ENCODE measurements at regions of chr9 and their contacts with region 1.

Region 1: GRCh38 chr9:129487642-129488409 is 133.1 kb downstream of the C9orf50 start:
- DNase-seq: peak; percentile 17
- H3K4me3 Mint-ChIP-seq: peak overlapping the region; percentile 92
- H3K27ac Mint-ChIP-seq: peak overlapping the region; percentile 98
- H3K4me1 Mint-ChIP-seq: peaks cover 60% of the 10 kb centered on the region
- H3K27me3 Mint-ChIP-seq: peaks cover 5% of the 10 kb centered on the region

Region 2: GRCh38 chr9:129258124-129258822 is 229.6 kb before region 1 on chr9:
- intact Hi-C with region 1: loop called (anchors 2 kb)
- DNase-seq: peak; percentile 85
- H3K4me3 Mint-ChIP-seq: peak overlapping the region; percentile 60
- H3K27ac Mint-ChIP-seq: no peak overlapping the region
- H3K4me1 Mint-ChIP-seq: peaks cover 33% of the 10 kb centered on the region
- H3K27me3 Mint-ChIP-seq: peaks cover 23% of the 10 kb centered on the region

Region 3: DNA sequence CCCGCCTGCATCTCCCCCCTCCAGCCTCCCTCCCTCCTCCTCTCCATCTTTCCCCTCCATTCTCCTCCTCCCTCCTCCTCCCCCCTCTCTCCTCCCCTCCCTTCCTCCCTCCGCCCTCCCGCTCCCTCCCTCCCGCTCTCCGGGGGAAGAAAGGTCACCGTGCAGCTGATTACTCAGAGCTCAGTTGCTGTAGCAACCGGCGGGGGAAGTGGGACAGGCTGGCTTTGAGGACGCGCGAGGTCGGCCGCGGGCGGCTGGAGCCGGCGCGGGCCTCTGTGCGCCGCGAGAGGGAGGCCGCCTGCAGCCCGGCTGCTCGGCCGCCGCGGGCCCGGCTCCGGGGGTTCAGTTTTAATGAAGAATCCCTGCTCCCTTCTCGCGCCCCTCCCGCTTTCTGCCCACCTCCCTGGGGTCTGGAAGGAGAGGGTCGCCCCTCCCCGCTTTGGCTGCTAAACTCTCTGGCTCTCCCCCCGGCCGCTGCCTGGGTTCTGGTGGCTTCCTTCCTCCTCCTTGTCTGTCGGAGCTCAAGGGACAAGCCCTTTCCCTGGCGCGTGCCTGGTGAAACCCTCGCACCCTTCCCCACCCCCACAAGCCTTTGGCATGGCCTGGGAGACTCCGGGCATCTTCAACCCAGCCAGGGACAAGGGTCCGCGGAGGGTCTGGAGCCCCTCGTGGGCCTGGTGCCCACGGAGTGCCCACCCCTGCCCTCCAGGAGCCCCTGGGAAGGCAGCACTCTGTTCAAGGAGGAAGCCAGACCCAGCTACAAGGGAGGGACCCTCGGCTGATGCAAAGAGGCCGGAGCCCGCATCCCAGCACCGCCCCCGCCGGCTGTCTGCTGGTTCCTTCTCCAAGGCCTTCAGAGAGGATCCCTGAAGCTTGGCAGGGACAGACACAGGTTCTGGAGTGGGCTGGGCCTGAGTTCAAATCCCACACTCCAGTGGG is 27.2 kb before region 1 on chr9:
- intact Hi-C with region 1: loop called (anchors 1 kb)
- DNase-seq: peak; percentile 83
- H3K4me3 Mint-ChIP-seq: peak overlapping the region; percentile 74
- H3K27ac Mint-ChIP-seq: peak overlapping the region; percentile 91
- H3K4me1 Mint-ChIP-seq: peaks cover 39% of the 10 kb centered on the region
- H3K27me3 Mint-ChIP-seq: peaks cover 1% of the 10 kb centered on the region

Region 4: GRCh38 chr9:129580211-129580915 is 92.5 kb after region 1 on chr9:
- intact Hi-C with region 1: loop called (anchors 1 kb)
- DNase-seq: peak; percentile 72
- H3K4me3 Mint-ChIP-seq: peak overlapping the region; percentile 84
- H3K27ac Mint-ChIP-seq: peak overlapping the region; percentile 83
- H3K4me1 Mint-ChIP-seq: peaks cover 90% of the 10 kb centered on the region
- H3K27me3 Mint-ChIP-seq: no peaks in the 10 kb centered on the region